ENCODE measurements at regions of chr11 and their contacts with region 1.

Region 1: GRCh38 chr11:86805873-86806310 is 5.5 kb downstream of the PRSS23 start:
- DNase-seq: peak; percentile 47
- ATAC-seq: peak; percentile 86
- H3K4me3 Mint-ChIP-seq: no peak overlapping the region
- H3K27ac Mint-ChIP-seq: peak overlapping the region; percentile 33
- H3K4me1 Mint-ChIP-seq: peaks cover 16% of the 10 kb centered on the region
- H3K27me3 Mint-ChIP-seq: peaks cover 35% of the 10 kb centered on the region

Region 2: GRCh38 chr11:86784241-86784681 is 21.6 kb before region 1 on chr11:
- CTCF ChIA-PET with region 1: no interaction called
- POLR2A ChIA-PET with region 1: no interaction called
- DNase-seq: no peak
- ATAC-seq: no peak
- H3K4me3 Mint-ChIP-seq: no peak overlapping the region
- H3K27ac Mint-ChIP-seq: no peak overlapping the region
- H3K4me1 Mint-ChIP-seq: no peaks in the 10 kb centered on the region
- H3K27me3 Mint-ChIP-seq: peaks cover 3% of the 10 kb centered on the region

Region 3: GRCh38 chr11:86818466-86819192 is 12.7 kb after region 1 on chr11:
- CTCF ChIA-PET with region 1: interaction called, 12 read pairs
- POLR2A ChIA-PET with region 1: no interaction called
- DNase-seq: no peak
- ATAC-seq: no peak
- H3K4me3 Mint-ChIP-seq: no peak overlapping the region
- H3K27ac Mint-ChIP-seq: no peak overlapping the region
- H3K4me1 Mint-ChIP-seq: no peaks in the 10 kb centered on the region
- H3K27me3 Mint-ChIP-seq: peaks cover 14% of the 10 kb centered on the region

Measured in activated CD8-positive, alpha-beta T cell treated with anti-CD3 and anti-CD28 coated beads, Interleukin-2, amount 10 ng/mL, durations not matched to agents 7 days and 5 days (primary cell).